ENCODE measurements at regions of chr2 and their contacts with region 1.

Region 1: DNA sequence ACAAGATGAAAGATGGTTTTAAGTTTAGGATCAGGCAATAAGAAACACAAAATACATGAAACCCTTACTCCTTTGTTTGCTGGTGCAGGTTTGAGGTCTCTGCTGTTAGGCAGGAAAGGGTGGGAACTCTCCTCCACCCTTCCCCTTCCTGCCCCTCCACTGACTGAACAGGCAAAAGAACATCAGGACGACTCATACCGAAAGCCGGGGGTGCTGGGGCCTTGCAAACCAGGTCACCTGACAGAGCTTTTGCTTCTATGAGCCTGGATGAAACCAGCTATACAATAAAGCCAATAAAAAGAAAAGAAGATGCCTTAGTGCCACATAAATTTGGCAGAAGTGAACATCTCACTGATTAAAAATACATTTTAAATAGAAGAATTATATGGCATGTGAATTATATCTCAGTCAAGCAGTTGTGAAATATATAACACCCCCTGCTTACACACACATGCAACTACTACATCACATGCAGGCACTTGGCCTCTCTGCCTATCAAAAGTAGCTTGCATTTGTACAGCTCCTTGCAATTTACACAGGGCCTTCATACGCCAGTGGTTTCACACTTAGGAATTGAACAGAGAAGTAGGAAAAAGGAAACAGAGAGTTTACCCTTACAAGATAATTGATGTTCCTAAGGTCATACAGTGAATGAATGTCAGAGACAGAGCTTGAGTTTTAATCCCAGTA is 215.1 kb upstream of the TRIB2 start:
- DNase-seq: peak; percentile 21 to 89 (median 66)
- ATAC-seq: peak; percentile 93
- H3K4me3 ChIP-seq: no peak overlapping the region
- H3K4me3 Mint-ChIP-seq: peak overlapping the region; percentile 67
- H3K27ac ChIP-seq: peak overlapping the region; percentile 17 to 91
- H3K27ac Mint-ChIP-seq: peak overlapping the region; percentile 80
- H3K4me1 ChIP-seq: peaks cover 76% of the 10 kb centered on the region
- H3K4me1 Mint-ChIP-seq: peaks cover 100% of the 10 kb centered on the region
- H3K27me3 ChIP-seq: no peaks in the 10 kb centered on the region
- H3K27me3 Mint-ChIP-seq: no peaks in the 10 kb centered on the region
- CTCF ChIP-seq: no peak

Region 2: DNA sequence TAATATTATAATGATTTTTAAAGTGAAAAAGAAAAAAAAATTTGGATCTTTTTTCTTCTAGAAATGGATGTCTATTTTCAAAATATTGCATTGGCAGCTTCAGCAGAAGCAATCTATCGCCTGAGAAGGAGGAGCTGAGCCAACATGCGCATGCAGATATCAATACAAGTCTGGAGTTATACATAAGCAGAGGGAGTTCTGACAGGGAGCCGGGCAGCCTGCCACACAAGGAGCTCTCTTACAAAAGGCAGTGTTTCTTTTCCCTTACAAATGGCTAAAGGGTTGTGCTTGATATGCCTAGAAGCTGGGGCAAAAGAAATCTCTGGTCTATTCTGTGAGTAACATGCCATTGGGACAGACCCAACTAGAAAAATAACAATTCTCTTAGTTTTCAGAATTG is 76.8 kb before region 1 on chr2:
- CTCF ChIA-PET with region 1: no interaction called
- POLR2A ChIA-PET with region 1: no interaction called
- intact Hi-C with region 1: no loop called
- DNase-seq: no peak
- ATAC-seq: no peak
- H3K4me3 ChIP-seq: no peak overlapping the region
- H3K4me3 Mint-ChIP-seq: no peak overlapping the region
- H3K27ac ChIP-seq: no peak overlapping the region
- H3K27ac Mint-ChIP-seq: peak overlapping the region; percentile 37
- H3K4me1 ChIP-seq: peaks cover 2% of the 10 kb centered on the region
- H3K4me1 Mint-ChIP-seq: peaks cover 46% of the 10 kb centered on the region
- H3K27me3 ChIP-seq: no peaks in the 10 kb centered on the region
- H3K27me3 Mint-ChIP-seq: no peaks in the 10 kb centered on the region
- CTCF ChIP-seq: no peak

Region 3: GRCh38 chr2:12452211-12452610 is 49.4 kb before region 1 on chr2:
- CTCF ChIA-PET with region 1: no interaction called
- POLR2A ChIA-PET with region 1: interaction called, 7 read pairs
- intact Hi-C with region 1: loop called in 1 of 2 experiments (anchors 5 kb)
- DNase-seq: peak in 2 of 14 experiments; percentile 19 to 20
- ATAC-seq: no peak
- H3K4me3 ChIP-seq: peak overlapping the region; percentile 23
- H3K4me3 Mint-ChIP-seq: peak overlapping the region; percentile 55
- H3K27ac ChIP-seq: peak overlapping the region in 1 of 2 donors; percentile 67
- H3K27ac Mint-ChIP-seq: peak overlapping the region; percentile 75
- H3K4me1 ChIP-seq: peaks cover 19% of the 10 kb centered on the region
- H3K4me1 Mint-ChIP-seq: peaks cover 54% of the 10 kb centered on the region
- H3K27me3 ChIP-seq: no peaks in the 10 kb centered on the region
- H3K27me3 Mint-ChIP-seq: no peaks in the 10 kb centered on the region
- CTCF ChIP-seq: no peak

Region 4: DNA sequence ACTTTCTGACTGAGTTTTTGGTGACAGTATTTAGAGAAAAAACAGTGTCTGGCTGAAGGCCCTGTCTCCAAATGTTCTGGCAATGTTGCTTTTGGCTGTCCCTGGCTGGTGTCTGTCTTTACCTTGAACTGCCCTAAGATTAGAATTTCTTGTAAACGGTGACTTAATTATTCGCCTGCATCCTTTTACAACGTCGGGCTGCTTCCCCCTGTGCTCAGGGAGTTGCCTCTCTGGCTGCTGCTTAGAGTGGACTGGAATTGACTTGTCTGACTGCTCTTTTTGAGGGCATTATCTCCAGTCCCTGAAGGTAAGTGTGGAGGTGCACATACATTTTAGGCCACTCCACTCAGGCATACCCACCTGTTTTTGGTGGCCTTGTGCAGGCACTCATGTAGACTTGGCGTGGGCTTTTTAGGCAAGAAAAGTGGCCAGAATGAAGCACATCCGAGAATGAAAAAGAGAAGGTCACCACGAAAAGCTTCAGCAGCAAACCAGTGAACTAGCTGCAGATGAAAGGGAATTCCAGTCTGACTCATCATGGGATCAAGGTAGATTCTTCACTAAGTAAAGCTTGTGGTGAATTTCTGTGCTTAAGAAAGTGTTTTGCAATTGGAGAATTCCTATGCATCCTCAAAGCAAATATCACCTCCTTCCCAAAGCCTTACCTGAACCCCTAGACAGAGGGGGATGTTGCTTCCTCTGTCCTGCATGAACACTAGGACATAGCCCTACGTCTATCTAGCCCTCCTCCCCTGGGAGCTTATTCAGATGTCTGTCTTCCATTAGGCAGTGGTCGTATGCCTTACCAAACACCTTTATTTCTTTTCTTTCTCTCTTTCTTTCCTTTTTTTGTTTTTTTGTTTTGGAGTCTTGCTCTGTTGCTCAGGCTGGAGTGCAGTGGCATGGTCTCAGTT is 15.2 kb before region 1 on chr2:
- CTCF ChIA-PET with region 1: no interaction called
- POLR2A ChIA-PET with region 1: interaction called, 28 read pairs
- intact Hi-C with region 1: no loop called
- DNase-seq: no peak
- ATAC-seq: no peak
- H3K4me3 ChIP-seq: no peak overlapping the region
- H3K4me3 Mint-ChIP-seq: no peak overlapping the region
- H3K27ac ChIP-seq: peak overlapping the region in 1 of 2 donors; percentile 68
- H3K27ac Mint-ChIP-seq: peak overlapping the region; percentile 83
- H3K4me1 ChIP-seq: peaks cover 53% of the 10 kb centered on the region
- H3K4me1 Mint-ChIP-seq: peaks cover 71% of the 10 kb centered on the region
- H3K27me3 ChIP-seq: no peaks in the 10 kb centered on the region
- H3K27me3 Mint-ChIP-seq: no peaks in the 10 kb centered on the region
- CTCF ChIP-seq: no peak

Region 5: DNA sequence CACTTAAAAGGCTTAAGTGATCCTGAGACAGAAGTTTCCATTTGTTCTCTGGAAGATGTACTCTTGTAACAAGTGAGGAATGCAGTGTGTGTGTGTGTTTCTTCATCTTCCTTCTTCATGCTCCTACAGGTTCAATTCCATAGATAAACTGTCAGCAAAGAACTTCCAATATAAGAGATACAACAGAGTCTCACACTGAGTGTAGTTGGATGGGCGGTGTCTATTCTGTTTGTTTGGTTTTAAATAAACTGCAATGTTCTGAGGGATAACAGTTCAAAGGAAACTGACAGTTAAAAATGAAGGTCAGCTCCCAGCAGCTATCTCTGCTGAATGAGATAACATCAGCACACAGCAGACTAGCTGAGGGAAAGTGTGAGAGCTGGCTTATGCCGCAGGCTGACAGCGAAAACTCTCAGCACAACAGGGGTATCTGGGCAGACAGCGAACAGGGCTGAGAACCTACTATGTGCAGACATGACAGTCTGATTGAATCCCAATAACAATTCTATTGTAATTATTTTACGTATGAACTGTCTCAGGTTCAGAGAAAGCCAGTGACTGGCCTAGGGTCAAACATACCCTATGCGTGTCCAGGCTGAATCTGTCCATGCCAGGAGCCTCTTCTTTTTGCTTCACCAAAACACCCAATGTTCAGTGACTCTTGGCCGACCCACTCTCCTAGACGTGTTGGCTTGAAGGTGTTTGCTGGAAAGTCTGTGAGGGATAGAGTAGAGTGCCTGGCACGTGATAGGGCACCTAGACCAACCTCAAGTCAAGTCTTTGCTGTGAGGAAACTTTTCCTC is 13.2 kb after region 1 on chr2:
- CTCF ChIA-PET with region 1: no interaction called
- POLR2A ChIA-PET with region 1: interaction called, 14 read pairs
- intact Hi-C with region 1: no loop called
- DNase-seq: peak in 10 of 14 experiments; percentile 14 to 73 (median 35)
- ATAC-seq: peak; percentile 86
- H3K4me3 ChIP-seq: no peak overlapping the region
- H3K4me3 Mint-ChIP-seq: peak overlapping the region; percentile 42
- H3K27ac ChIP-seq: peak overlapping the region; percentile 14 to 32
- H3K27ac Mint-ChIP-seq: peak overlapping the region; percentile 80
- H3K4me1 ChIP-seq: peaks cover 35% of the 10 kb centered on the region
- H3K4me1 Mint-ChIP-seq: peaks cover 80% of the 10 kb centered on the region
- H3K27me3 ChIP-seq: no peaks in the 10 kb centered on the region
- H3K27me3 Mint-ChIP-seq: no peaks in the 10 kb centered on the region
- CTCF ChIP-seq: no peak